HEK293 (cell line): ENCODE measurements at regions of chr7 and their contacts with region 1.

Region 1: DNA sequence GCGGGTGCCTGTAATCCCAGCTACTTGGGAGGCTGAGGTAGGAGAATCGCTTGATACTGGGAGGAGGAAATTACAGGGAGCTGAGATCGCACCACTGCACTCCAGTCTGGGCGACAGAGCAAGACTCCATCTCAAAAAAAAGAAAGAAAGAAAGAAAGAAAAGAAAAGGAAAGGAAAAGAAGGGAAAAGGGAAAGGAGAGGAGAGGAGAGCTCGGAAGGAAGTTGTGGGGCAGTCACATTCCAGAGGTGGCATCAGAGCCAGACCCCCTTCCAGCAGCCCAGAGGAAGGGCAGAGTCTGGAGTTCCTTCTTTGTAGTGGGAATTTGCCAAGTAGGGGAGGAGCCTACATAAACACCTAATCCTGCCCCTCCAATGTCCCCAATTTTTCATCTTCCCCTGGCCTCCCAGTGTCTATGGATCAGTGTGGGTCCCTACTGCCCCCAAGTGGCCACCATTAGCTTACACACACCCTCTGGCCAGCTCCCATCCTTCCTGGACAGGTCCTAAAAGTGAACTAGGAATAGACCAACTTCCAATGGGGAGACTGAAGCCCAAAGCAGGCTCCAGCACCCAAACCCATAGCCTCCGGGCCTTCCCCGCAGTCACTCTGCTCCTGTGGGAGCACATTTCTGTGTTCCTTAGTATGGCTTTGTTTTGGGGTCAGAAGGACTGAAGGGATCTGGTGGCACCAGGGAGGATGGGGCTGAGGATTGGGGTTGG is 39.6 kb upstream of the HSPB1 start:
- H3K4me3 ChIP-seq: no peak overlapping the region
- H3K27ac ChIP-seq: no peak overlapping the region
- H3K4me1 ChIP-seq: no peaks in the 10 kb centered on the region
- CTCF ChIP-seq: 0 out of 2 replicates have a peak, but pooled peaks have one; percentile 13

Region 2: GRCh38 chr7:76069238-76069638 is 193.6 kb before region 1 on chr7:
- CTCF ChIA-PET with region 1: interaction called, 14 read pairs
- POLR2A ChIA-PET with region 1: no interaction called
- H3K4me3 ChIP-seq: no peak overlapping the region
- H3K27ac ChIP-seq: no peak overlapping the region
- H3K4me1 ChIP-seq: no peaks in the 10 kb centered on the region
- CTCF ChIP-seq: 0 out of 2 replicates have a peak, but pooled peaks have one; percentile 20

Region 3: GRCh38 chr7:76121044-76121443 is 141.8 kb before region 1 on chr7:
- CTCF ChIA-PET with region 1: no interaction called
- POLR2A ChIA-PET with region 1: no interaction called
- H3K4me3 ChIP-seq: no peak overlapping the region
- H3K27ac ChIP-seq: no peak overlapping the region
- H3K4me1 ChIP-seq: no peaks in the 10 kb centered on the region
- CTCF ChIP-seq: no peak

Region 4: GRCh38 chr7:76179686-76180085 is 83.2 kb before region 1 on chr7:
- CTCF ChIA-PET with region 1: interaction called, 50 read pairs
- POLR2A ChIA-PET with region 1: interaction called, 4 read pairs
- H3K4me3 ChIP-seq: no peak overlapping the region
- H3K27ac ChIP-seq: no peak overlapping the region
- H3K4me1 ChIP-seq: no peaks in the 10 kb centered on the region
- CTCF ChIP-seq: no peak

Region 5: GRCh38 chr7:76252020-76252419 is 10.8 kb before region 1 on chr7:
- CTCF ChIA-PET with region 1: interaction called, 13 read pairs
- POLR2A ChIA-PET with region 1: no interaction called
- H3K4me3 ChIP-seq: no peak overlapping the region
- H3K27ac ChIP-seq: no peak overlapping the region
- H3K4me1 ChIP-seq: no peaks in the 10 kb centered on the region
- CTCF ChIP-seq: no peak

Region 6: DNA sequence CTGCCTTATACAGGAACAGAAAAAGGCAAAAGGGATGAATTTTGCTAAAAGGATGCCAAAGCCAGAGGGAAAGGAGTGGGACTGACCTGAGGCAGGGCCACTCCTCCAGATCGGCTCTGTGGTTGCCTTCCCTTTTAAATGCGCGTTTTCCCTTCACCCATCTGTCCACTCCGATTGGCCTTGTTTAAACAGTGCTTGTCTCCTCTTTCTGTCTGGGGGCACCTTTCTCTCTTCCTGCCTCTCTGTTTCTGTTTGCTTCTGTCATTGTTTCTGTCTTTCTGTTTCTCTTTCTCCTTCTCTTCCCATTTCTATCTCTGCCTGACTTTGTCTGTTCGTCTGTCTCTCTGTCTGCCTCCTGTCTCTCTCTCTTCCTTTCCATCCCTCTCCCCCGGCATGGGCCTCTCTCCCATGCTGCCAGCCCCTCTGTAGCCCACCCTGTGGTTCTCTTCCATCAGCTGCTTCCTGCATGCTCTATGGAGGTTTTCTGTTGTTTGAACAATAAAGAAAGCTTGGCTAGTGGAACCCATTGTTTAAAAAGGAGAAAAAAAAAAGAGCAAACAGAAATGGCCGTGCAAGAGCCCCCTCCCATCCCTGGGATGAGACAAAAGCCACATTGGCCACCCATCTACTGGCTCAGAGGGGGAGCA is 10.1 kb after region 1 on chr7:
- CTCF ChIA-PET with region 1: interaction called, 12 read pairs
- POLR2A ChIA-PET with region 1: no interaction called
- H3K4me3 ChIP-seq: no peak overlapping the region
- H3K27ac ChIP-seq: no peak overlapping the region
- H3K4me1 ChIP-seq: no peaks in the 10 kb centered on the region
- CTCF ChIP-seq: no peak

Region 7: GRCh38 chr7:76515999-76516443 is 253.2 kb after region 1 on chr7:
- CTCF ChIA-PET with region 1: no interaction called
- POLR2A ChIA-PET with region 1: no interaction called
- H3K4me3 ChIP-seq: no peak overlapping the region
- H3K27ac ChIP-seq: no peak overlapping the region
- H3K4me1 ChIP-seq: no peaks in the 10 kb centered on the region
- CTCF ChIP-seq: no peak